Body of pancreas (tissue), 4 donors: ENCODE measurements at regions of chr10 and their contacts with region 1.

Region 1: DNA sequence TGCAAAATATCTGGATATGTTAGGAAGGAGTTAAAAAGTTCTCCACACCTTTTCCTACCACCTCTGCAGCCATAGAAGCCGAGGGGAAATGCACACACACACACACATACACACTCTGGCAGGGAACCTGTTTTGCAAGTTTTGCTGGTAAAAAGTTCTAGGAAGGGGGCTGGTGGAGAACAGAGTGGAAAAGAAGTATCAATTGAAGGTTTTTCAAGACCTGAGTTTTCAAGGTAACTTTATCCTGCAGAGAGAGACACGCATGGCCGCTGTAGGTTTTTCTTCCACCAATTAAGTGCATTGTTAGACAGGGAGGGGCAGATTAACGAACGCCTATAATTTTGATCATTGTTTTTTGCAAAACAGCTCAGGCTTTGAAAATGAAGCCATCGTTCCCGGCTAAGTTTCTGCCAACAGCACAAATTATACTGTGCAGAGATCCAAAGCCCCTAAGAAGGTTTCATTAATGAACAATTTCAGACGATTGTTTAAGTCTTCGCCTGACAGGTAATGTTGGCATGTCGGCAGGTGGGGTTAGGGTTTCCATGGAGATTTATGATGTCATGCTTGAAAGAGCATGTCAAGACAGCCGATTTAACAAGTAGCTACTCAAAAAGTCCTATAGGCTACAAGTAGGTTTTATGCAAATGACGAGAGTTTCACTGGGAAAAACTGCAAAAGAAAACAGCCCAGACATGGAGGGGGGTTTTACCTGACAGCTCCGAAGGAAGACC is 29.7 kb downstream of the KIAA1217 start:
- DNase-seq: peak; percentile 56 to 70 (median 63)
- ATAC-seq: peak; percentile 72
- H3K4me3 ChIP-seq: no peak overlapping the region
- H3K27ac ChIP-seq: peak overlapping the region; percentile 62 to 86 (median 84)
- H3K4me1 ChIP-seq: peaks cover 38% of the 10 kb centered on the region
- H3K27me3 ChIP-seq: no peaks in the 10 kb centered on the region
- CTCF ChIP-seq: no peak
- POLR2A ChIP-seq: no peak

Region 2: GRCh38 chr10:23630880-23631279 is 607.8 kb before region 1 on chr10:
- intact Hi-C with region 1: no loop called
- DNase-seq: no peak
- ATAC-seq: no peak
- H3K4me3 ChIP-seq: no peak overlapping the region
- H3K27ac ChIP-seq: no peak overlapping the region
- H3K4me1 ChIP-seq: no peaks in the 10 kb centered on the region
- H3K27me3 ChIP-seq: no peaks in the 10 kb centered on the region
- CTCF ChIP-seq: no peak
- POLR2A ChIP-seq: no peak

Region 3: DNA sequence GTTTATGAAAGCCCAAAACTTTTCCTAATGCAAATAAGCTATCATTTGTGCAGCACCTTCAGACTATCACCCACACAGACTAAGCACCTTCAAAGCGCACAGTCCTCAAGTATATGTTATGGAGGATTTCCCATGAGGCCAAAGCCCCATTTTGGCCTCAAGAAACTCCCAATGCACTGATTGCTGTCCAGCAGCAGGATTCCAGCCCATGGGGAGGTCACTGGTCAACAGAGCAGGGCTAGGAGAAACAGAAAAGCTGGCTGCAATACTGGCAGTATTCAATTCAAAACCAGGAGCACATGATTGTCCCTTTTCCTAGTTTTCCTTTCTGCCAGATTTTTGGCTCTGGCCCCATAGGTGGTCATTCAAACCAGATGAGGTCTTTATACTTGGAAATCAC is 54.2 kb before region 1 on chr10:
- intact Hi-C with region 1: no loop called
- DNase-seq: no peak
- ATAC-seq: no peak
- H3K4me3 ChIP-seq: no peak overlapping the region
- H3K27ac ChIP-seq: no peak overlapping the region
- H3K4me1 ChIP-seq: peaks cover 4% of the 10 kb centered on the region
- H3K27me3 ChIP-seq: no peaks in the 10 kb centered on the region
- CTCF ChIP-seq: no peak
- POLR2A ChIP-seq: no peak

Region 4: DNA sequence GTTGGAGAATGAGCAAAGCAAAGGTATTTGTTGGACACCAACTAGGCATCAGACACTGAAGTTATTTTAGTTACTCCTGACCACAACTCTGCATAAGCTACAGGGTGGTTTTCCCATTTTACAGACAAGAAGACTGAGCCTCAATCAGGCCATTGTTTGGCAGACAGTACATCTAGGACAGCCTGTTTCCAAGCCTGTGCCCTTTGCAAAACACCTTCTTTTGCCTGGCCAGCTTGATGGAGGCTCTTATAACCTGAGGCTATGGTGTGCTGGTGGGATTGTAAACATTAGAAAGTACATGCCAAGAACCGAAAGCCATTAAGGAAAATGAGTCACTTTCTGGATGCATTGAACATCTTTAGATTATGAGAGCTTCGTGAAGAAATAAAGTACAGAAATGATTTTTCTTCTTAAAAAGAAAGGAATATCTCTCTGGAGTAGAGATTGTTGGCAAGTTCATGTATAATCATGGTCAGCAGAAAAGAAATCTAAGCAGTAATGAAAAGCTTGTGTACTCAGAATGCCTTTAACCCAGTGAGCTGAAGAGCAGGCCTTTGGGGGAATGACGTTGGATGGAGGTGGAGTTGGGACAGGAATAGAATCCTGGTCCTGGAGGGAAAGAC is 110.8 kb after region 1 on chr10:
- intact Hi-C with region 1: loop called (anchors 10 kb)
- DNase-seq: no peak
- ATAC-seq: no peak
- H3K4me3 ChIP-seq: no peak overlapping the region
- H3K27ac ChIP-seq: peak overlapping the region in 1 of 4 donors; percentile 11
- H3K4me1 ChIP-seq: peaks cover 17% of the 10 kb centered on the region
- H3K27me3 ChIP-seq: no peaks in the 10 kb centered on the region
- CTCF ChIP-seq: no peak
- POLR2A ChIP-seq: no peak